K562 (cell line): ENCODE measurements at regions of chr18 and their contacts with region 1.

Region 1: DNA sequence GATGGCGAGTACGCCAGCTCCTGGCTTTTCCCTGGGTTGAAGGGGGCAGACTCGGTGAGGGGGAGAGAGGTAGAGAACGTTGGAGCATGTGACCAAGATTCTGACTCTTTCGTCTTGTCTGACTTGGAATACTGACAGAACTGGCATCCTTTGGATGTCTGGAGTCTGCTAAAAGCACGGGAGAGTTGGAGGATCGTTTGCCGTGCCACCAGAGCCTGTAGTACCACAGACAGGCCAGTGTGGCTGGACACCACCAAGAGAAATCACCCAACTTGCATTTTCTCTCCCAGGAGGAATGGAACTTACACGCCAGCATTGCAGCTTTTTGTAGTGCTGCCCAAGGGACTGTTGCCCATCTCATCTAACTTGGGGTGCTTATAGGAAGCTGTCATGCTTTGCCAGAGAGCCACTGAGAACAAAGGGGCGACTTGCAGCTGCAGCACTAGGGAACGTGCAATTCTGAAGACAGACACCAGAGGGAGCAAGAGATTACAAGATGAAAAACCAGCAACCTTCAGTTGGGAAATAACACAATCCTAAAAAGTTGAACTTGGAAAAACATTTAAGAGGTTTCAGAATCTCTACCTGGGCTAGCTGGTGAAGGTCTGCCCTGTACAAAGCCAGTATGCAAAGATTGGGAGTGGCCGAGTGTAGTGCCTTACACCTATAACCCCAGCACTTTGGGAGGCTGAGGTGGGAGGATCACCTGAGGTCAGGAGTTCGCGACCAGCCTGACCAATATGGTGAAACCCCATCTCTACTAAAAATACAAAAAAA is 24.1 kb downstream of the PSMG2 start:
- DNase-seq: peak; percentile 57 to 76 (median 65)
- ATAC-seq: peak; percentile 81
- H3K4me3 ChIP-seq: no peak overlapping the region
- H3K27ac ChIP-seq: no peak overlapping the region
- H3K4me1 ChIP-seq: no peaks in the 10 kb centered on the region
- H3K27me3 ChIP-seq: no peaks in the 10 kb centered on the region
- CTCF ChIP-seq: peak; percentile 81 to 91 (median 84)
- EP300 ChIP-seq: no peak
- POLR2A ChIP-seq: peak; percentile 32; the same call in 1 of the 2 replicates
- RAD21 ChIP-seq: peak; percentile 90 to 92

Region 2: GRCh38 chr18:12750076-12750714 is 23.2 kb after region 1 on chr18:
- CTCF ChIA-PET with region 1: no interaction called
- POLR2A ChIA-PET with region 1: no interaction called
- in situ Hi-C with region 1: no loop called
- intact Hi-C with region 1: no loop called
- DNase-seq: no peak
- ATAC-seq: no peak
- H3K4me3 ChIP-seq: no peak overlapping the region
- H3K27ac ChIP-seq: no peak overlapping the region
- H3K4me1 ChIP-seq: peaks cover 0 to 7% of the 10 kb centered on the region in 2 experiments; a peak in 2 of 5 replicates
- H3K27me3 ChIP-seq: no peaks in the 10 kb centered on the region
- CTCF ChIP-seq: no peak
- EP300 ChIP-seq: no peak
- POLR2A ChIP-seq: no peak
- RAD21 ChIP-seq: no peak

Region 3: GRCh38 chr18:12766986-12767433 is 40.0 kb after region 1 on chr18:
- CTCF ChIA-PET with region 1: interaction called, 11 read pairs
- POLR2A ChIA-PET with region 1: no interaction called
- in situ Hi-C with region 1: no loop called
- intact Hi-C with region 1: no loop called
- DNase-seq: peak; percentile 66 to 72 (median 71)
- ATAC-seq: peak; percentile 95
- H3K4me3 ChIP-seq: no peak overlapping the region
- H3K27ac ChIP-seq: no peak overlapping the region
- H3K4me1 ChIP-seq: peaks cover 12 to 13% of the 10 kb centered on the region in 2 experiments
- H3K27me3 ChIP-seq: no peaks in the 10 kb centered on the region
- CTCF ChIP-seq: peak; percentile 74 to 76 (median 75)
- EP300 ChIP-seq: no peak
- POLR2A ChIP-seq: no peak
- RAD21 ChIP-seq: peak; percentile 54 to 70

Region 4: DNA sequence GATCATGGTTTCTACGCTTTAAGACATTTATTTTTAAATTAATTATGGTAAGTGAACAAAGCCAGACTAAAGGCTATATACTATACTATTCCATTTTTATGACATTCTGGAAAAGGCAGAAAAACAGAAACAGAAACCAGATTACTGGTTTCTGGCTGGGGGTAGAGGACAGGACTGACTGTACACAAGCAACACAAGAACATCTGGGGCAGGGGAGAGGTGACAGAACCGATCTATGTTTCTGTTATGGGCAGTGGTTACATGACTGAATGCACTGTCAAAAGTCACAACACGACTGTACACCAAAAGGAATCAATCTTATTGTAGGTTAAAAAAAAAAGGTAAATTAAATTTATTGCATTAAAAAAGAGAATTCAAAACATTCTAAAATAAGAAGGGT is 92.4 kb after region 1 on chr18:
- CTCF ChIA-PET with region 1: no interaction called
- POLR2A ChIA-PET with region 1: no interaction called
- in situ Hi-C with region 1: no loop called
- intact Hi-C with region 1: no loop called
- DNase-seq: no peak
- ATAC-seq: no peak
- H3K4me3 ChIP-seq: no peak overlapping the region
- H3K27ac ChIP-seq: no peak overlapping the region
- H3K4me1 ChIP-seq: no peaks in the 10 kb centered on the region
- H3K27me3 ChIP-seq: no peaks in the 10 kb centered on the region
- CTCF ChIP-seq: no peak
- EP300 ChIP-seq: no peak
- POLR2A ChIP-seq: no peak
- RAD21 ChIP-seq: no peak

Region 5: DNA sequence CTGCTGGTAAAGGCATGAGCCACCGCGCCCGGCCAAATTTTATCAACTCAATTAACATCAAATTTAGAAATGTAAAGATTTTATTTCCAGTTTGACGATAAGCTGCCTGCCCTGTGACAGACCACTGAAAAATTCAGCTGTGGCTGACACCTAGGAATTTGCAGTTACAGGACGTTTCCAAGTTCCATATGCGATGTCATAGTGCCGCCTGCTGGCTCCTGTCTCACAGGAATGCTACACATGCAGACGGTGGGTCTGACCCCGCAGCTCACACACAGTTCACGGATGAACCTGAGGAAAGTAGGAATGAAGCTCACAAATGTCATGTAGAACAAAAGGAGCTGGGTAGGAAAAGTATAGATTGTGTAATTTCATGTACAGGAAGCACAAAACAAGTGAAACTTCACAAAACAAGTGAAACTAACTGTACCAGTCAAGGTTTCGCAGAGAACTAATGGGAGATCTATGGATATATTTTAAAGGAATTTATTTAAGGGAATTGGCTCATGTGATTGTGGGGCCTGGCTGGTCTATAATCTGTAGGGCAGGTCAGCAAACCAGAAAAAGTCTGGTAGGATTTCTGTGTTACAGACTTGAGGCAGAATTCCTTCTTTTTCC is 207.6 kb after region 1 on chr18:
- CTCF ChIA-PET with region 1: interaction called, 49 read pairs
- POLR2A ChIA-PET with region 1: interaction called, 5 read pairs
- in situ Hi-C with region 1: loop called (anchors 5 kb)
- intact Hi-C with region 1: loop called (anchors 1 kb)
- DNase-seq: peak; percentile 68 to 89 (median 74)
- ATAC-seq: peak; percentile 95
- H3K4me3 ChIP-seq: no peak overlapping the region
- H3K27ac ChIP-seq: no peak overlapping the region
- H3K4me1 ChIP-seq: no peaks in the 10 kb centered on the region; a peak in 1 of 5 replicates
- H3K27me3 ChIP-seq: no peaks in the 10 kb centered on the region
- CTCF ChIP-seq: peak; percentile 92 to 98 (median 98)
- EP300 ChIP-seq: no peak
- POLR2A ChIP-seq: no peak
- RAD21 ChIP-seq: peak; percentile 95 to 99